CD4-positive, alpha-beta memory T cell (primary cell): ENCODE measurements at regions of chr9 and their contacts with region 1.

Region 1: DNA sequence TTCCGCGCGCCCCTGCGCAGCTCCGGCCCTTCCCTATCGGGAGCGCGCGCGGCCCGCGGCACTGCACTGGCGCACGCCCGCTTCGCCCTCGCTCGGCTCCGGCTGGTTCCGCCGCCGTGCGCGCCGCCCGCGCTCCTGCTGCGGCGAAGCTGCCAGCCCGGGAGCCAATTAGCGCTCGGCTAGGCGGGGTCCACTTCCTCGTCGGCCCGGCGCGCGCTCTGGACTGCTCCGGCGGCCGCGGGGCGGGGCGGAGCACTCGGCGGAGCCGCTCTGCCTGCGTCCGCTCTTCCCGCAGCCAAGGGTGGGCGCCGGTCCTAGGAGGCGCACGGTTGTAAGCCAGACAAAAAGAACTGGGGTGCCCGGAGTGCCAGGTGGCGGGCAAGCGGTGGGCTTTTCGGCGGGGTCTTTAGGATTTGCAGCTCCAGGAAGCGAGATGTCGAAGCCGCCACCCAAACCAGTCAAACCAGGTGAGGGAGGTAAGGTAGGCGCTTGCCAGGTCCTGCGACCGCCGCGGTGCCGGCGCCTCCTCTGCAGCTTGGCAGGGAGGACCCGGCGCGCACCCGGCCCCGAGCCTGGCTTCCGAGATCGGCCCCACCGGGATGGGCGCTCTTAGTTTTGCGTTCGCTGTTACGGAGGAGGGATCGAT is at the start of gene OSTF1:
- DNase-seq: peak; percentile 92 to 97 (median 96)
- H3K4me3 ChIP-seq: peak within 1 kb of the TSS; percentile 89 to 97
- H3K4me3 Mint-ChIP-seq: peak within 1 kb of the TSS; percentile 99 to 100 (median 100)
- H3K27ac ChIP-seq: peak within 1 kb of the TSS; percentile 92
- H3K27ac Mint-ChIP-seq: peak within 1 kb of the TSS; percentile 90 to 98 (median 97)
- H3K4me1 ChIP-seq: peaks cover 73% of the 10 kb centered on the region
- H3K4me1 Mint-ChIP-seq: peaks cover 54 to 87% (median 66%) of the 10 kb centered on the region in 4 donors
- H3K27me3 ChIP-seq: no peaks in the 10 kb centered on the region
- H3K27me3 Mint-ChIP-seq: no peaks in the 10 kb centered on the region
- total RNA-seq, gene OSTF1: 59.8 to 60.8 TPM

Region 2: GRCh38 chr9:74773886-74774479 is 314.4 kb before region 1 on chr9:
- CTCF ChIA-PET with region 1: interaction called, 10 read pairs
- POLR2A ChIA-PET with region 1: no interaction called
- intact Hi-C with region 1: no loop called
- DNase-seq: peak; percentile 61 to 66 (median 61)
- H3K4me3 ChIP-seq: no peak overlapping the region
- H3K4me3 Mint-ChIP-seq: no peak overlapping the region
- H3K27ac ChIP-seq: no peak overlapping the region
- H3K27ac Mint-ChIP-seq: no peak overlapping the region
- H3K4me1 ChIP-seq: no peaks in the 10 kb centered on the region
- H3K4me1 Mint-ChIP-seq: peaks cover 0 to 3% (median 2%) of the 10 kb centered on the region in 4 donors
- H3K27me3 ChIP-seq: no peaks in the 10 kb centered on the region
- H3K27me3 Mint-ChIP-seq: peaks cover 14 to 19% of the 10 kb centered on the region in 2 donors

Region 3: DNA sequence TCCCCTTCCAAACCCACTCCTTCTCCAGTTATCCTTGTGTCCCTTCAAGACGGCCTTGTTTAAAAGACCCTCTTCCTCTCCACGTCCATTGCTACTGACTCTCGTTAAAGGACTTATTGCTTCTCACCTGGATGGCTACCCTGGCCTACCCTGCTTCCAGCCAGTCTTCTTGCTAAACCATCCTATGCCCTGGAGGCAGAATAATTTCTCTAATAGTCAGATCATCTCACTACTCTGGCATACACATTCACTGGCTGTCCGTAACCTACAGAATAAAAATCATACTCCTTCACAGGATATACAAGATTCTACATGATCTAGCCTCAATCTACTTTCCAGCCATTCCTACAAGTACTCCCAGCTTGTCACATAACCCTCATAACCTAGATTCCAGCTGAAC is 293.3 kb before region 1 on chr9:
- CTCF ChIA-PET with region 1: no interaction called
- POLR2A ChIA-PET with region 1: no interaction called
- intact Hi-C with region 1: no loop called
- DNase-seq: no peak
- H3K4me3 ChIP-seq: no peak overlapping the region
- H3K4me3 Mint-ChIP-seq: no peak overlapping the region
- H3K27ac ChIP-seq: no peak overlapping the region
- H3K27ac Mint-ChIP-seq: no peak overlapping the region
- H3K4me1 ChIP-seq: no peaks in the 10 kb centered on the region
- H3K4me1 Mint-ChIP-seq: peaks cover 0 to 3% (median 0%) of the 10 kb centered on the region in 4 donors
- H3K27me3 ChIP-seq: no peaks in the 10 kb centered on the region
- H3K27me3 Mint-ChIP-seq: peaks cover 1 to 3% of the 10 kb centered on the region in 2 donors

Region 4: GRCh38 chr9:75027187-75028107 is 60.9 kb before region 1 on chr9:
- CTCF ChIA-PET with region 1: interaction called, 21 read pairs
- POLR2A ChIA-PET with region 1: interaction called, 126 read pairs
- intact Hi-C with region 1: loop called (anchors 1 kb)
- DNase-seq: peak in 4 of 5 donors; percentile 17 to 63 (median 41)
- H3K4me3 ChIP-seq: peak overlapping the region; percentile 72 to 74
- H3K4me3 Mint-ChIP-seq: peak overlapping the region; percentile 94 to 98 (median 96)
- H3K27ac ChIP-seq: peak overlapping the region; percentile 77
- H3K27ac Mint-ChIP-seq: peak overlapping the region; percentile 89 to 99 (median 96)
- H3K4me1 ChIP-seq: peaks cover 48% of the 10 kb centered on the region
- H3K4me1 Mint-ChIP-seq: peaks cover 33 to 54% (median 43%) of the 10 kb centered on the region in 4 donors
- H3K27me3 ChIP-seq: no peaks in the 10 kb centered on the region
- H3K27me3 Mint-ChIP-seq: peaks cover 0 to 2% of the 10 kb centered on the region in 2 donors

Region 5: DNA sequence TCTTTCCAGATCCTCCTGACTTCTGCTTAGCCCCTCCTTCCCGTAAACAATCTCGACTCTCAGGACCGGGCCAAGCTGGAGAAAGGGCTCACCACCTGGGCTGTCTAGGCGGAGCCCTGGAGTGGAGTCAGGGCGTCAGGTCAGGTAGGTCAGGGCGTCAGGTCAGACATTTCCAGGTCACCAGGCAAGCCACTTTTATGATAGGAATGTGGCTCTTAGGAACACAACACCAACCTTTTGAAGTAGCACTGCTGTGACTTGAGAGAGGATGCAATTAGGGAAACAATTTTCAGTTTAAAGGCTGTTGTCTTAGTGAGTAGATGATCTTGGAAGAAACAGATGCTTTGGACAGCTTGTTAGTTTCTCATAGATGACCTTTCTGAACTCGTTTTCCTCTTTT is 12.7 kb after region 1 on chr9:
- CTCF ChIA-PET with region 1: interaction called, 16 read pairs
- POLR2A ChIA-PET with region 1: interaction called, 40 read pairs
- intact Hi-C with region 1: loop called (anchors 2 kb)
- DNase-seq: no peak
- H3K4me3 ChIP-seq: no peak overlapping the region
- H3K4me3 Mint-ChIP-seq: peak overlapping the region in 6 of 8 donors; percentile 13 to 40 (median 36)
- H3K27ac ChIP-seq: peak overlapping the region; percentile 26
- H3K27ac Mint-ChIP-seq: peak overlapping the region; percentile 64 to 92 (median 76)
- H3K4me1 ChIP-seq: peaks cover 84% of the 10 kb centered on the region
- H3K4me1 Mint-ChIP-seq: peaks cover 57 to 85% (median 72%) of the 10 kb centered on the region in 4 donors
- H3K27me3 ChIP-seq: no peaks in the 10 kb centered on the region
- H3K27me3 Mint-ChIP-seq: no peaks in the 10 kb centered on the region

Region 6: GRCh38 chr9:75142202-75142601 is 53.8 kb after region 1 on chr9:
- CTCF ChIA-PET with region 1: interaction called, 20 read pairs
- POLR2A ChIA-PET with region 1: interaction called, 251 read pairs
- intact Hi-C with region 1: no loop called
- DNase-seq: no peak
- H3K4me3 ChIP-seq: no peak overlapping the region
- H3K4me3 Mint-ChIP-seq: peak overlapping the region in 7 of 8 donors; percentile 19 to 80 (median 66)
- H3K27ac ChIP-seq: no peak overlapping the region
- H3K27ac Mint-ChIP-seq: peak overlapping the region; percentile 75 to 90 (median 79)
- H3K4me1 ChIP-seq: peaks cover 84% of the 10 kb centered on the region
- H3K4me1 Mint-ChIP-seq: peaks cover 50 to 86% (median 67%) of the 10 kb centered on the region in 4 donors
- H3K27me3 ChIP-seq: no peaks in the 10 kb centered on the region
- H3K27me3 Mint-ChIP-seq: no peaks in the 10 kb centered on the region

Region 7: GRCh38 chr9:75185585-75186170 is 97.3 kb after region 1 on chr9:
- CTCF ChIA-PET with region 1: interaction called, 20 read pairs
- POLR2A ChIA-PET with region 1: interaction called, 13 read pairs
- intact Hi-C with region 1: loop called (anchors 1 kb)
- DNase-seq: peak; percentile 28 to 38 (median 34)
- H3K4me3 ChIP-seq: no peak overlapping the region
- H3K4me3 Mint-ChIP-seq: no peak overlapping the region
- H3K27ac ChIP-seq: no peak overlapping the region
- H3K27ac Mint-ChIP-seq: peak overlapping the region in 3 of 7 donors; percentile 9 to 39 (median 36)
- H3K4me1 ChIP-seq: peaks cover 15% of the 10 kb centered on the region
- H3K4me1 Mint-ChIP-seq: peaks cover 14 to 23% (median 18%) of the 10 kb centered on the region in 4 donors
- H3K27me3 ChIP-seq: no peaks in the 10 kb centered on the region
- H3K27me3 Mint-ChIP-seq: no peaks in the 10 kb centered on the region

Region 8: DNA sequence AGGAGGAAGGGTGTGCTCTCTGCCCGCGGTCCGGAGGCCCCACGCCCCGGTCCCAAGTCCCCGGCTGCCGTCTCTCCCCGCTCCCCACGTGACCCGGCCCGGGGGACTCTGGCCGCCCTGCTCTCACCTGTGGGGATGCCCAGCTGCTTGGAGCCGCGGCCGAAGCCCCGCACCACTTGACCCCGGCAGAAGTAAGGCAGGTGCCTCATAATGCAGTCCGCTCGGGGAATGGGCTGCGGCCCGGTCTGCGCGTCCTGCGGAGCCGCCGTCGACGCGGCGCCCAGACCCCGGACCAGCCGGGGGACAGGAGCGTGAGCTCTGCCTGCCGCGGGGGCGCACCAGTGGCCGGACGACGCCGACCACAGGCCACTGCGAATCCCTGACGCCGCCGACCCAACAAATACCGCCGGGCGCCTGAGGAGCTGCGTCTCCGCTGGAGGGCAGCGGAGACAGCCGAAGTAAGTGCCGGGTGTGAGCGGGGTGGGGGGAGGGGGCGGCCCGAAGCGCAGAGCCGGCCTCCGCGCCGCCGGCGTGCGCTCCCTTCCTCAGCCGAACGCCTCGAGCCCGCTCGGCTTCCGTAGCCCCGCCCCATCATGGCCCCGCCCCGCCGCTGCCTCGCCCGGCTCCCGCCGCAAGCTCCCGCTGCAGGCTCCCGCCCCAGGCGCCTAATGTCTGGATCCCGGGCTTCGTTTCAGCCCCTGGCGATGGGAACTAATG is 1305.7 kb after region 1 on chr9 and contains the start of gene RFK:
- CTCF ChIA-PET with region 1: no interaction called
- POLR2A ChIA-PET with region 1: interaction called, 7 read pairs
- intact Hi-C with region 1: loop called (anchors 1 kb)
- DNase-seq: peak; percentile 90 to 96 (median 93)
- H3K4me3 ChIP-seq: peak within 1 kb of the TSS; percentile 72 to 74
- H3K4me3 Mint-ChIP-seq: peak within 1 kb of the TSS; percentile 91 to 98 (median 95)
- H3K27ac ChIP-seq: peak within 1 kb of the TSS; percentile 79
- H3K27ac Mint-ChIP-seq: peak within 1 kb of the TSS; percentile 94 to 100 (median 98)
- H3K4me1 ChIP-seq: peaks cover 25% of the 10 kb centered on the region
- H3K4me1 Mint-ChIP-seq: peaks cover 12 to 38% (median 25%) of the 10 kb centered on the region in 4 donors
- H3K27me3 ChIP-seq: no peaks in the 10 kb centered on the region
- H3K27me3 Mint-ChIP-seq: no peaks in the 10 kb centered on the region
- total RNA-seq, gene RFK: 13.5 to 16.8 TPM

Region 9: GRCh38 chr9:76438841-76439588 is 1350.6 kb after region 1 on chr9:
- CTCF ChIA-PET with region 1: no interaction called
- POLR2A ChIA-PET with region 1: no interaction called
- intact Hi-C with region 1: no loop called
- DNase-seq: no peak
- H3K4me3 ChIP-seq: no peak overlapping the region
- H3K4me3 Mint-ChIP-seq: no peak overlapping the region
- H3K27ac ChIP-seq: no peak overlapping the region
- H3K27ac Mint-ChIP-seq: no peak overlapping the region
- H3K4me1 ChIP-seq: peaks cover 8% of the 10 kb centered on the region
- H3K4me1 Mint-ChIP-seq: peaks cover 0 to 6% (median 4%) of the 10 kb centered on the region in 4 donors
- H3K27me3 ChIP-seq: no peaks in the 10 kb centered on the region
- H3K27me3 Mint-ChIP-seq: peaks cover 2 to 3% of the 10 kb centered on the region in 2 donors